A673 (cell line): ENCODE measurements at regions of chr22 and their contacts with region 1.

Region 1: GRCh38 chr22:38782402-38783094 is 11.4 kb downstream of the DNAL4 start:
- DNase-seq: peak; percentile 90
- H3K4me3 ChIP-seq: peak overlapping the region; percentile 33
- H3K27ac ChIP-seq: peak overlapping the region; percentile 92
- H3K4me1 ChIP-seq: peaks cover 44% of the 10 kb centered on the region
- H3K27me3 ChIP-seq: no peaks in the 10 kb centered on the region
- CTCF ChIP-seq: no peak

Region 2: GRCh38 chr22:38802671-38803121 is 20.1 kb after region 1 on chr22:
- CTCF ChIA-PET with region 1: no interaction called
- POLR2A ChIA-PET with region 1: interaction called, 4 read pairs
- intact Hi-C with region 1: loop called (anchors 1 kb)
- DNase-seq: peak; percentile 99
- H3K4me3 ChIP-seq: no peak overlapping the region
- H3K27ac ChIP-seq: peak overlapping the region; percentile 92
- H3K4me1 ChIP-seq: peaks cover 39% of the 10 kb centered on the region
- H3K27me3 ChIP-seq: no peaks in the 10 kb centered on the region
- CTCF ChIP-seq: no peak